Gastrocnemius medialis (tissue), 4 donors: ENCODE measurements at regions of chr1 and their contacts with region 1.

Region 1: GRCh38 chr1:156659994-156660751 is 17.0 kb downstream of the NES start:
- DNase-seq: peak; percentile 89 to 95
- ATAC-seq: peak; percentile 58 to 59
- H3K4me3 ChIP-seq: peak overlapping the region in 1 of 4 donors; percentile 46
- H3K27ac ChIP-seq: peak overlapping the region; percentile 91 to 97 (median 94)
- H3K4me1 ChIP-seq: peaks cover 72% of the 10 kb centered on the region in 2 donors
- H3K27me3 ChIP-seq: peaks cover 8 to 14% (median 14%) of the 10 kb centered on the region in 3 donors
- CTCF ChIP-seq: peak; percentile 99 to 100 (median 100)
- POLR2A ChIP-seq: no peak

Region 2: DNA sequence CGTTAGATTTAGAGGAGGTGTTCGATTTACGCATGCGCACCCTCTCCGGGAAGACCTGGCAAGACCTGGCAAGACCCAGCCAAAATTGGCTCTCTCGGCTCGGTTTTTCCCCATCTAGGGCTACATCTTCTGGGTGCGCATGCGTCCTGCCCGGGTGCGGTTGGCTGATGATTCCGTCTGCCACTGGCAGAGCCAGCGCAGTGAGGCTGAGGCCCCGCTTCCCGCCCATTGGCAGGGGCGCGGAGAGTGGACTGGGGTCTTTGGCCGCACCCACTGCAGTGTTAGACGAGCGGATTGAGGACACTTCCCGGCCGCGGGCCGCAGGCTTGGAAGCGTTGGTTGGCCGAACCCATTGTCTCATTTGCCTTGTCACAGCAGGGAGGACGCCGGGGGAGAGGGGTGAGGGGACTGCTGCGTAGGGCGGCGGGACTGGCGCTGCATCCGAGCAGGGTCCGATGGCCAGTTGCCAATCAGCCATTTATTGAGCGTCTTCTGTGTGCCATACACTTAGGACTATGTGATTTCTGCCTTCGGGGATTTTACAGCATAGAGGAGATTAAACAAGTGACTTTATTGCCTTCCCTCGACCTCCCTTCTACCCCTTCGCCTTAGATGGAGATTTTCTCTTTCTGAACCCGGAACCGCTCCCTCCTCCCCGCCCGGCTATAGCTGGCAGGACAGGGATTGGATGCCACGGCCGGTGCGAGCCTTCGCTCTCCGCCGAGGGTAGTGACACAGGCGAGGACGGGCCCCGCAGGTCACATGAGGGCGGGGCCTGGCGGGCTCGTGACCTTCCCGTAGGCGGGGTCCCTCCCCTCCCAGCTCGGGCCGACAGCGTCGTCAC is 203.3 kb before region 1 on chr1:
- in situ Hi-C with region 1: no loop called
- intact Hi-C with region 1: loop called (anchors 5 kb)
- DNase-seq: peak; percentile 99
- ATAC-seq: peak; percentile 84 to 85
- H3K4me3 ChIP-seq: peak overlapping the region; percentile 60 to 76 (median 73)
- H3K27ac ChIP-seq: peak overlapping the region; percentile 96 to 99 (median 98)
- H3K4me1 ChIP-seq: peaks cover 4 to 8% of the 10 kb centered on the region in 2 donors
- H3K27me3 ChIP-seq: no peaks in the 10 kb centered on the region
- CTCF ChIP-seq: peak in 1 of 5 experiments; percentile 16
- POLR2A ChIP-seq: peak; percentile 86 to 95

Region 3: GRCh38 chr1:156583821-156584622 is 76.2 kb before region 1 on chr1:
- in situ Hi-C with region 1: no loop called
- intact Hi-C with region 1: loop called (anchors 5 kb)
- DNase-seq: peak; percentile 40 to 63
- ATAC-seq: peak; percentile 71 to 75
- H3K4me3 ChIP-seq: no peak overlapping the region
- H3K27ac ChIP-seq: no peak overlapping the region
- H3K4me1 ChIP-seq: peaks cover 0 to 9% of the 10 kb centered on the region in 2 donors
- H3K27me3 ChIP-seq: no peaks in the 10 kb centered on the region
- CTCF ChIP-seq: peak; percentile 75 to 94 (median 90)
- POLR2A ChIP-seq: no peak

Region 4: GRCh38 chr1:156618853-156619581 is 41.2 kb before region 1 on chr1 and contains the start of gene HAPLN2:
- in situ Hi-C with region 1: no loop called
- intact Hi-C with region 1: no loop called
- DNase-seq: no peak
- ATAC-seq: no peak
- H3K4me3 ChIP-seq: no peak within 1 kb of the TSS
- H3K27ac ChIP-seq: peak within 1 kb of the TSS in 2 of 4 donors; percentile 28 to 47
- H3K4me1 ChIP-seq: peaks cover 1 to 9% of the 10 kb centered on the region in 2 donors
- H3K27me3 ChIP-seq: peaks cover 14 to 26% (median 20%) of the 10 kb centered on the region in 3 donors
- CTCF ChIP-seq: peak in 1 of 5 experiments; percentile 36
- POLR2A ChIP-seq: no peak
- total RNA-seq, gene HAPLN2: 0.53 to 6.0 (median 3.0) TPM

Region 5: DNA sequence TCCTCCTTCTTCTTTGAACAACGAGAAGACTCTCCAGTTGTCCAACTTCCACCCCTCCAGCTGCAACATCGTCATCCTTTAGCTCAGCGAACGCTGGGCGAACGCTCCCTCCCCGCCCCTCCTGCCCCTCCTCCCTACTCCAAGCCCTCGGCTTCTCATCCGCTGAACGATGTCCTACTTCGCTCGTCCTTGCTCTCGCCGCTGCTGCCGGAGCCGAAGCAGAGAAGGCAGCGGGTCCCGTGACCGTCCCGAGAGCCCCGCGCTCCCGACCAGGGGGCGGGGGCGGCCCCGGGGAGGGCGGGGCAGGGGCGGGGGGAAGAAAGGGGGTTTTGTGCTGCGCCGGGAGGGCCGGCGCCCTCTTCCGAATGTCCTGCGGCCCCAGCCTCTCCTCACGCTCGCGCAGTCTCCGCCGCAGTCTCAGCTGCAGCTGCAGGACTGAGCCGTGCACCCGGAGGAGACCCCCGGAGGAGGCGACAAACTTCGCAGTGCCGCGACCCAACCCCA is 18.4 kb before region 1 on chr1 and contains the start of gene BCAN:
- in situ Hi-C with region 1: no loop called
- intact Hi-C with region 1: no loop called
- DNase-seq: no peak
- ATAC-seq: no peak
- H3K4me3 ChIP-seq: peak within 1 kb of the TSS; percentile 45 to 54 (median 48)
- H3K27ac ChIP-seq: no peak within 1 kb of the TSS
- H3K4me1 ChIP-seq: peaks cover 14 to 31% of the 10 kb centered on the region in 2 donors
- H3K27me3 ChIP-seq: peaks cover 28 to 35% (median 29%) of the 10 kb centered on the region in 3 donors
- CTCF ChIP-seq: no peak
- POLR2A ChIP-seq: no peak
- total RNA-seq, gene BCAN: 0.26 to 0.29 TPM in 2 of 4 donors, not detected in the others

Region 6: GRCh38 chr1:156677616-156678596 is 17.7 kb after region 1 on chr1:
- in situ Hi-C with region 1: no loop called
- intact Hi-C with region 1: loop called (anchors 1 kb)
- DNase-seq: peak; percentile 47 to 68
- ATAC-seq: peak; percentile 72 to 79
- H3K4me3 ChIP-seq: peak overlapping the region; percentile 54 to 64 (median 64)
- H3K27ac ChIP-seq: peak overlapping the region; percentile 73 to 79 (median 77)
- H3K4me1 ChIP-seq: peaks cover 25 to 45% of the 10 kb centered on the region in 2 donors
- H3K27me3 ChIP-seq: no peaks in the 10 kb centered on the region
- CTCF ChIP-seq: peak; percentile 92 to 99 (median 93)
- POLR2A ChIP-seq: no peak

Region 7: DNA sequence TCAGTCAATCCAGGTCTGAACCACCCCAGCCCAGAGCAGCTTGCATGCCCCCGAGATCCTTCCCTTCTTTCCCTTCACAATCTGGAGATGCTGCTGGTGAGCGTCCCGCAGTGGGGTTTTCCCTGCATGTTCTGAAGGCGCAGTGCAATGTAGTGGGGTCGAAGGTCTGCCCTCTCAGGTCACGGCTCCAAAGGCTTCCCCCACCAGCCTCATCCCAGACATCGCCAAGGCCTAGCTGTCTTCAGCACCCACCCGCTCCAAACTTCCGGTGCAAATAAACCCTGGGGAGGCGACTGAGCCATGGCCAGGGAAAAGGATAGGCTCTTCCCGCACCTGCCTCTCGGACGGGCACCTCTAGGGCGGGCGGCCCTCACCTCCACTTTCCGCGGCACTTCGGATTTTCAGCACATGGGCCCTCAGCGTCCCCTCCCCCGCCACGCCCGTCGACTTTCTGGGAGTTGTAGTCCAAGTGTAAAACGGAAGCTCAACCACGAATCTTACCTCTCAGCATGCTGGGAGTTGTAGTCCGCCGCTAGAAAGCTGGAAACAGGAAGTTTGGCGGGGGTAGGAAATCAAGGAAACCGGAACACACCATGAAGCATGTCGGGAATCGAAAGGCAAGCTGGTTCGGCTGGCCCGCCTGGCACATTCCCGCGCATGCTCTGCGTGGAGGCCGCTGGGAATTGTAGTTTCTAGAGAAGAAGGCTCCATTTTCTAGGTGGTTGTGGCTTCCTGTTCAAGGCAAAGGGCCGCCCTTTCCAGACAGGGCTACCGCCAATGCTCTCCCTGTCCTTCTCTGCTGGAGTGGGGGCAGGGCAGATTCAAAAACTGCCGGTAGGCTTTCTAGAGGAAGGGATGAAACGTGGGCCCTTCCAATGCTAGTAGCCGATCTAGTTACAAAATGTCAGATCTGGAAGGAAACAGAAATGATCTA is 80.8 kb after region 1 on chr1 and contains the start of gene MRPL24:
- in situ Hi-C with region 1: no loop called
- intact Hi-C with region 1: loop called (anchors 5 kb)
- DNase-seq: peak; percentile 99
- ATAC-seq: peak; percentile 97 to 98
- H3K4me3 ChIP-seq: peak within 1 kb of the TSS; percentile 73 to 94 (median 76)
- H3K27ac ChIP-seq: peak within 1 kb of the TSS; percentile 87 to 99 (median 92)
- H3K4me1 ChIP-seq: peaks cover 27 to 29% of the 10 kb centered on the region in 2 donors
- H3K27me3 ChIP-seq: no peaks in the 10 kb centered on the region
- CTCF ChIP-seq: peak in 1 of 5 experiments; percentile 8
- POLR2A ChIP-seq: peak; percentile 14 to 36
- total RNA-seq, gene MRPL24: 54.9 to 121 (median 102) TPM